ENCODE measurements at regions of chr6 and their contacts with region 1.

Region 1: GRCh38 chr6:52537001-52537753 is 39.7 kb downstream of the TRAM2 start:
- DNase-seq: peak in 1 of 9 donors; percentile 7
- ATAC-seq: peak; percentile 46
- H3K4me3 ChIP-seq: no peak overlapping the region
- H3K4me3 Mint-ChIP-seq: peak overlapping the region in 7 of 10 donors; percentile 11 to 52 (median 36)
- H3K27ac ChIP-seq: no peak overlapping the region
- H3K27ac Mint-ChIP-seq: peak overlapping the region in 7 of 9 donors; percentile 5 to 48 (median 37)
- H3K4me1 ChIP-seq: peaks cover 11 to 29% of the 10 kb centered on the region in 2 donors
- H3K4me1 Mint-ChIP-seq: peaks cover 36 to 63% (median 52%) of the 10 kb centered on the region in 7 donors
- H3K27me3 ChIP-seq: no peaks in the 10 kb centered on the region
- H3K27me3 Mint-ChIP-seq: no peaks in the 10 kb centered on the region

Region 2: GRCh38 chr6:52389626-52390360 is 147.4 kb before region 1 on chr6:
- CTCF ChIA-PET with region 1: no interaction called
- POLR2A ChIA-PET with region 1: no interaction called
- intact Hi-C with region 1: no loop called
- DNase-seq: peak; percentile 33 to 79 (median 62)
- ATAC-seq: peak; percentile 60
- H3K4me3 ChIP-seq: peak overlapping the region; percentile 62
- H3K4me3 Mint-ChIP-seq: peak overlapping the region; percentile 75 to 89 (median 86)
- H3K27ac ChIP-seq: peak overlapping the region; percentile 89
- H3K27ac Mint-ChIP-seq: peak overlapping the region; percentile 93 to 100 (median 98)
- H3K4me1 ChIP-seq: peaks cover 59 to 75% of the 10 kb centered on the region in 2 donors
- H3K4me1 Mint-ChIP-seq: peaks cover 49 to 96% (median 90%) of the 10 kb centered on the region in 7 donors
- H3K27me3 ChIP-seq: no peaks in the 10 kb centered on the region
- H3K27me3 Mint-ChIP-seq: peaks cover 0 to 6% (median 0%) of the 10 kb centered on the region in 5 donors

Region 3: GRCh38 chr6:52491203-52492069 is 45.7 kb before region 1 on chr6:
- CTCF ChIA-PET with region 1: no interaction called
- POLR2A ChIA-PET with region 1: no interaction called
- intact Hi-C with region 1: loop called in 1 of 2 experiments (anchors 5 kb)
- DNase-seq: no peak
- ATAC-seq: no peak
- H3K4me3 ChIP-seq: no peak overlapping the region
- H3K4me3 Mint-ChIP-seq: no peak overlapping the region
- H3K27ac ChIP-seq: no peak overlapping the region
- H3K27ac Mint-ChIP-seq: no peak overlapping the region
- H3K4me1 ChIP-seq: no peaks in the 10 kb centered on the region
- H3K4me1 Mint-ChIP-seq: peaks cover 0 to 37% (median 0%) of the 10 kb centered on the region in 7 donors
- H3K27me3 ChIP-seq: no peaks in the 10 kb centered on the region
- H3K27me3 Mint-ChIP-seq: peaks cover 0 to 10% (median 0%) of the 10 kb centered on the region in 5 donors

Region 4: GRCh38 chr6:52610745-52611355 is 73.7 kb after region 1 on chr6:
- CTCF ChIA-PET with region 1: no interaction called
- POLR2A ChIA-PET with region 1: no interaction called
- intact Hi-C with region 1: no loop called
- DNase-seq: no peak
- ATAC-seq: no peak
- H3K4me3 ChIP-seq: no peak overlapping the region
- H3K4me3 Mint-ChIP-seq: no peak overlapping the region
- H3K27ac ChIP-seq: no peak overlapping the region
- H3K27ac Mint-ChIP-seq: no peak overlapping the region
- H3K4me1 ChIP-seq: no peaks in the 10 kb centered on the region
- H3K4me1 Mint-ChIP-seq: peaks cover 0 to 2% (median 0%) of the 10 kb centered on the region in 7 donors
- H3K27me3 ChIP-seq: peaks cover 3 to 5% of the 10 kb centered on the region in 2 donors
- H3K27me3 Mint-ChIP-seq: peaks cover 0 to 22% (median 4%) of the 10 kb centered on the region in 5 donors